Calu3 (cell line): ENCODE measurements at regions of chr6 and their contacts with region 1.

Region 1: DNA sequence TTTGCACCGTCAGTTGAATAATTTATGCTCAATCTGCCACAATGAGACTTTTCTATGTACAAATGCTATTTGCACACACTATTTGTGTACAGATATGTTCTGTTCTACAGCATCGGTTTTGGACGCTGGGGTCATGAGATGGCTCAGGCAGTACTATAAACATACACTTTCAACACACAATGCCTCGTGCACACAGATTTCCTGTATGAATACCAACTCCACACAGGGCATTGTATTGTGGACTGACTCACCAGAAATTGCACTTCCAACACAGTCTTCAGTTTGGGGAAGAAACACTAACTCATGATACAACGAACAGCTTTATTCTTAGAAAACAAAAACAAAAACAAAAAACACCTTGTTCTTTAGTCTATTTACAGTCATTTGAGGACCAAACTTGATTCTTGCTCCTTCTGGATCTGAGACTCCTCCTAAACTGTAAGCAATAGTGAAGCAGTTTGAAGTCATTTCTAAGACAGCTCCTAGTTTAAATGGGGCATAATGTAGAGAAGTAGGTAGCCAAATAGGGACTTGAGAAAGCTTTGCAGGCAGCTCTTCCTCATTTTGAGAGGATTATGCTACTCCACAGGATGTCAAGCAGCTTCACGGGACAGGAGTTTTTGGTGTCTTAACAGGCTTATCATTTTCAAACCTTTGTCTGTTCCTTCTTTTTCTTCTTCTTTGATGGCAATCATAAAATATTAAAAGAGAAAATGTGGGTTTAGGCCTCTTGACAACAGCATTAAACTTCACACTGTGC is 33.7 kb downstream of the GJA10 start:
- DNase-seq: no peak
- H3K4me3 Mint-ChIP-seq: no peak overlapping the region
- H3K27ac Mint-ChIP-seq: no peak overlapping the region
- H3K4me1 Mint-ChIP-seq: peaks cover 10% of the 10 kb centered on the region
- H3K27me3 Mint-ChIP-seq: no peaks in the 10 kb centered on the region
- CTCF ChIP-seq: no peak

Region 2: GRCh38 chr6:89559487-89559886 is 368.5 kb before region 1 on chr6:
- CTCF ChIA-PET with region 1: no interaction called
- intact Hi-C with region 1: no loop called
- DNase-seq: no peak
- H3K4me3 Mint-ChIP-seq: no peak overlapping the region
- H3K27ac Mint-ChIP-seq: no peak overlapping the region
- H3K4me1 Mint-ChIP-seq: no peaks in the 10 kb centered on the region
- H3K27me3 Mint-ChIP-seq: peaks cover 30% of the 10 kb centered on the region
- CTCF ChIP-seq: no peak

Region 3: GRCh38 chr6:90216072-90216977 is 288.4 kb after region 1 on chr6:
- CTCF ChIA-PET with region 1: interaction called, 10 read pairs
- intact Hi-C with region 1: no loop called
- DNase-seq: no peak
- H3K4me3 Mint-ChIP-seq: no peak overlapping the region
- H3K27ac Mint-ChIP-seq: no peak overlapping the region
- H3K4me1 Mint-ChIP-seq: peaks cover 6% of the 10 kb centered on the region
- H3K27me3 Mint-ChIP-seq: no peaks in the 10 kb centered on the region
- CTCF ChIP-seq: no peak